ENCODE measurements at regions of chr6 and their contacts with region 1.

Region 1: GRCh38 chr6:17803409-17803808 is 96.7 kb upstream of the NUP153 start:
- DNase-seq: no peak
- ATAC-seq: no peak
- H3K4me3 Mint-ChIP-seq: no peak overlapping the region
- H3K27ac Mint-ChIP-seq: no peak overlapping the region
- H3K4me1 Mint-ChIP-seq: no peaks in the 10 kb centered on the region
- H3K27me3 Mint-ChIP-seq: peaks cover 7% of the 10 kb centered on the region

Region 2: GRCh38 chr6:17584241-17584803 is 219.1 kb before region 1 on chr6:
- CTCF ChIA-PET with region 1: interaction called, 13 read pairs
- POLR2A ChIA-PET with region 1: no interaction called
- DNase-seq: peak; percentile 30
- ATAC-seq: peak; percentile 62
- H3K4me3 Mint-ChIP-seq: no peak overlapping the region
- H3K27ac Mint-ChIP-seq: no peak overlapping the region
- H3K4me1 Mint-ChIP-seq: peaks cover 10% of the 10 kb centered on the region
- H3K27me3 Mint-ChIP-seq: peaks cover 10% of the 10 kb centered on the region

Region 3: GRCh38 chr6:17599885-17600526 is 203.4 kb before region 1 on chr6 and contains the start of gene FAM8A1:
- CTCF ChIA-PET with region 1: interaction called, 12 read pairs
- POLR2A ChIA-PET with region 1: no interaction called
- DNase-seq: peak; percentile 97
- ATAC-seq: peak; percentile 85
- H3K4me3 Mint-ChIP-seq: peak within 1 kb of the TSS; percentile 82
- H3K27ac Mint-ChIP-seq: peak within 1 kb of the TSS; percentile 89
- H3K4me1 Mint-ChIP-seq: peaks cover 41% of the 10 kb centered on the region
- H3K27me3 Mint-ChIP-seq: no peaks in the 10 kb centered on the region
- total RNA-seq, gene FAM8A1: 6.2 TPM

Region 4: GRCh38 chr6:17673543-17674254 is 129.7 kb before region 1 on chr6:
- CTCF ChIA-PET with region 1: interaction called, 11 read pairs
- POLR2A ChIA-PET with region 1: no interaction called
- DNase-seq: no peak
- ATAC-seq: peak; percentile 76
- H3K4me3 Mint-ChIP-seq: no peak overlapping the region
- H3K27ac Mint-ChIP-seq: peak overlapping the region; percentile 28
- H3K4me1 Mint-ChIP-seq: peaks cover 20% of the 10 kb centered on the region
- H3K27me3 Mint-ChIP-seq: no peaks in the 10 kb centered on the region

Region 5: GRCh38 chr6:17700421-17701416 is 102.7 kb before region 1 on chr6:
- CTCF ChIA-PET with region 1: interaction called, 33 read pairs
- POLR2A ChIA-PET with region 1: no interaction called
- DNase-seq: no peak
- ATAC-seq: no peak
- H3K4me3 Mint-ChIP-seq: no peak overlapping the region
- H3K27ac Mint-ChIP-seq: peak overlapping the region; percentile 46
- H3K4me1 Mint-ChIP-seq: peaks cover 51% of the 10 kb centered on the region
- H3K27me3 Mint-ChIP-seq: no peaks in the 10 kb centered on the region

Region 6: DNA sequence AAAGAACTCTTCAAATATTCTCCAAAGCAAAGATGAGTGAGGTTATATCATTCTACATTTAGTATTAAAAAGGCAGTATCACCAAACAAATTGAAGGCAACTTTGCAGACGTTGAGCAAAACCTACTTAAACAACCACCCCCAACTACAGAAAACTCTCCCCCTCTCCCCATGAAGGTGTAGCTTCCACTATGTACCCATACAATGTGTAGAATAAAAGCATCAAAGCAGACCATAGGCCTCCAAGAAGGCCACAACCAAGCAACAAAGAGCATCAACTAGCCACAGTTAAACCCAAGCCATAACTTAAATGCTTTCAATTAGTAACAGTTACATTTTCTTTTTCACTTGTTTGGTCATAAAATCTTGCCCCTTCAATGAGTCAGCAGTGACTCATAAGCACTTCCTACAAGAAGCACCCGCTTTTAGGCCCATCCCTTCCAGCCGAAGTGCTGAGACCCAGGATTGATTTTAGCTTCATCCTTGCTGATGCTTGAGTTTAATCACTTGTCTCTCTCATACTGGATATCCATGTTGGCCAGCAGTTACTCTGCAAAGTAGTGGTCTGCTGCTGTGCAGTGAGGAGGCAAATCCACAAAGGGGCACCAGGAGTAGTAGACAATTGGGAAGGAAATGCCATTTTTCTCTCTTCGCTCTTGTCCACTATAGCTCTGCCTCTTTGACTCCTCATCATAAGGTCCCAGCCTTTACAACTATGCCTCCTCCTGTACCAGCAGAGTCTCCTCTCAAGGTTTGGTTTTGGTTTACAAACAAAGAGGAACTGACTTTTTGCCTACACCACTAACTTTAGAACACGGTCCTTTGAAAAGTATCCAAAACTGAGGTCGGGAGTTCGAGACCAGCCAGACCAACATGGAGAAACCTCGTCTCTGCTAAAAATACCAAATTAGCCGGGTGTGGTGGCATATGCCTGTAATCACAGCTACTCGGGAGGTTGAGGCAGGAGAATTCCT is 88.2 kb before region 1 on chr6:
- CTCF ChIA-PET with region 1: interaction called, 10 read pairs
- POLR2A ChIA-PET with region 1: no interaction called
- DNase-seq: peak; percentile 54
- ATAC-seq: peak; percentile 87
- H3K4me3 Mint-ChIP-seq: peak overlapping the region; percentile 51
- H3K27ac Mint-ChIP-seq: peak overlapping the region; percentile 83
- H3K4me1 Mint-ChIP-seq: peaks cover 22% of the 10 kb centered on the region
- H3K27me3 Mint-ChIP-seq: peaks cover 7% of the 10 kb centered on the region

Region 7: DNA sequence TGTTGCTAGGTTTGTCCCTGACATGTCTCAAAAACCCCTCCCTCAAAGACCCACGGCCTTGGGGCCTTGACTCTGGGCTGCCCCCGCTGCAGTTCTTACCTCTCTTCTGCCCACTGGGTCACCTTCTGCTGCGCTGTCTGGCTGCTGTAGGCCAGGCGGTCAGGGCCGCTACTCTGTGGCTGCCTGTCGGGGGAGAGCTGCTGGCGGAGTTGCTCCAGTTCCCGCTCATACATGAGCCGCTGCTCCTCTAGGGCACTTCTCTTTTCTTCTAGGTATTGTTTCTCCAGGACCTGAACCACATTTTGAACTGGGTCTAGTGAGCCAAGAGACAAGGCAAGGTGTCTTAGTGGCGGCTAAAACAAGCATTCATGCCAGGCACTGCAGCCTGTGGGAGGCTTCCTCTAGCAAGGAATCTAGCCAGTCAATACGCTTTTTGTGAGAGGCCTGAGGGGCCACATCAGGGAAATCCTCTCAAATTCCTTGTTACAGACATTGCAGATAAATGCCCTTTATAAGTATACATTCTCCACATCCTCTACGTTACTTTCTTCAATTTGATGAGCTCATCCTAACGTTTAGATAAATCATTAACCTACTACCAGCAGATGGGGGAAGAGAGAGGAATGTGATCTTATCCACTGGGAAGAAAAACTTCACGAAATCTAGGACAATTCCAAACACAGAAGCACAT is 13.7 kb after region 1 on chr6:
- CTCF ChIA-PET with region 1: interaction called, 15 read pairs
- POLR2A ChIA-PET with region 1: no interaction called
- DNase-seq: no peak
- ATAC-seq: no peak
- H3K4me3 Mint-ChIP-seq: no peak overlapping the region
- H3K27ac Mint-ChIP-seq: no peak overlapping the region
- H3K4me1 Mint-ChIP-seq: no peaks in the 10 kb centered on the region
- H3K27me3 Mint-ChIP-seq: peaks cover 9% of the 10 kb centered on the region

Measured in activated CD8-positive, alpha-beta T cell treated with anti-CD3 and anti-CD28 coated beads, Interleukin-2, amount 10 ng/mL, durations not matched to agents 7 days and 5 days (primary cell).